ENCODE measurements at regions of chr10 and their contacts with region 1.

Region 1: GRCh38 chr10:21570761-21571521 is 36.9 kb downstream of the MLLT10 start:
- DNase-seq: no peak
- H3K4me3 ChIP-seq: no peak overlapping the region
- H3K27ac ChIP-seq: no peak overlapping the region
- H3K27me3 ChIP-seq: no peaks in the 10 kb centered on the region
- CTCF ChIP-seq: no peak

Region 2: DNA sequence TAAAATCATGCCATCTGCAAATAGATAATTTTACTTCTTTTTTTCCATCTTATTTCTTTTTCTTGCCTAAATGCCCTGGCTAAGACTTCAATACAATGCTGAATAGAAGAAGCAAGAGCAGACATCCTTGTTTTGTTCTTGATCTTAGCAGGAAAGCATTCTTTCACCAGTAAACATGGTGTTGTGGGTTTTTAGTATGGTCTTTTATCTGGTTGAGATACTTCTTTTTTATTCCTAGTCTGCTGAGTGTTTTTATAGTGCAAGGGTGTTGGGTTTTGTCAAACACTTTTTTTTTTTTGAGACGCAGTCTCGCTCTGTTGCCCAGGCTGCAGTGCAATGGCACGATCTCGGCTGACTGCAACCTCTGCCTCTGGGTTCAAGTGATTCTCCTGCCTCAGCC is 200.3 kb after region 1 on chr10:
- CTCF ChIA-PET with region 1: interaction called, 16 read pairs
- POLR2A ChIA-PET with region 1: no interaction called
- DNase-seq: no peak
- H3K4me3 ChIP-seq: no peak overlapping the region
- H3K27ac ChIP-seq: no peak overlapping the region
- H3K27me3 ChIP-seq: no peaks in the 10 kb centered on the region
- CTCF ChIP-seq: no peak

Measured in AG04450 (cell line).